Thyroid gland (tissue), 4 donors: ENCODE measurements at regions of chr10 and their contacts with region 1.

Region 1: GRCh38 chr10:11986593-11987216 is 55.9 kb downstream of the UPF2 start:
- DNase-seq: peak; percentile 86 to 90
- H3K4me3 ChIP-seq: no peak overlapping the region
- H3K27ac ChIP-seq: no peak overlapping the region
- H3K4me1 ChIP-seq: no peaks in the 10 kb centered on the region
- H3K27me3 ChIP-seq: no peaks in the 10 kb centered on the region
- CTCF ChIP-seq: peak; percentile 81 to 97 (median 87)
- POLR2A ChIP-seq: no peak

Region 2: GRCh38 chr10:11782793-11783557 is 203.7 kb before region 1 on chr10:
- intact Hi-C with region 1: loop called (anchors 5 kb)
- DNase-seq: no peak
- H3K4me3 ChIP-seq: no peak overlapping the region
- H3K27ac ChIP-seq: no peak overlapping the region
- H3K4me1 ChIP-seq: no peaks in the 10 kb centered on the region
- H3K27me3 ChIP-seq: no peaks in the 10 kb centered on the region
- CTCF ChIP-seq: peak; percentile 47 to 74 (median 59)
- POLR2A ChIP-seq: no peak

Region 3: GRCh38 chr10:12051241-12051640 is 64.5 kb after region 1 on chr10:
- intact Hi-C with region 1: no loop called
- DNase-seq: no peak
- H3K4me3 ChIP-seq: no peak overlapping the region
- H3K27ac ChIP-seq: no peak overlapping the region
- H3K4me1 ChIP-seq: peaks cover 0 to 6% of the 10 kb centered on the region in 2 donors
- H3K27me3 ChIP-seq: no peaks in the 10 kb centered on the region
- CTCF ChIP-seq: no peak
- POLR2A ChIP-seq: no peak

Region 4: DNA sequence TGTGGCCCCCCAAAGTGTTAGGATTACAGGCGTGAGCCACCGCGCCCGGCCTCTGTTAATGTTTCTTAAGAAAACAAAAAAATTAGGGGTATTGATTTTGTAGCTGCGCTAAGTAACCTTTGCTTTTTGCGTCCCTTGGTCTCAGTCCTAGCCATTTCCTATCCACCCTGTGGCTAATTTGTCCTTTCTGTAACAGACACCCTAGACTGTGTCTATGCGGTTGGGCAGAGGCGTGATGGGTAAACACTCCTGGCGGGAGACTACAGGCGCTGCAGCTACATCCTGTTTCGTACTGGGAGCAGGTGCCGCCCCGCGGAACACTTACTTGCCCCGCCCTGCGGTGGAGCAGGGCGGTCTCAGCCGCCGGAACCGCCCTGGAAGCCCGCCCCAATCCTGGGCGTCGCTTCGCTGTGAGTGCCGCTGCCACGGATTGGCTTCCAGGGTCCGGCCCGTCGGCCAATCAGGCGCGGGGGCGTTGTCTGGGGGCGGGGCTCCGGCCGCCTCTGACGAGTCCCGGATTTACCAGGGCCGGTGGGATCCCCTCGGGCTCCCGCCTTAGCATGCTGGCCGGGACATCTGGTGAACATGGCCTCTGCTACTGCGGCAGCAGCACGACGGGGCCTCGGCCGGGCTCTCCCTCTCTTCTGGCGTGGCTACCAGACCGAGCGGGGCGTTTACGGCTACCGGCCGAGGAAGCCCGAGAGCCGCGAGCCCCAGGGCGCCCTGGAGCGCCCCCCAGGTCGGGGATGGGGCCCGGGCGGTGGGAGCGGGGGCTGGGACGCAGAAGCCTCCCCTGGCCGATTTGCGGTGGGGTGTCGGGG is 82.0 kb after region 1 on chr10 and contains the start of gene DHTKD1:
- intact Hi-C with region 1: no loop called
- DNase-seq: peak; percentile 98 to 99
- H3K4me3 ChIP-seq: peak within 1 kb of the TSS; percentile 50 to 91 (median 59)
- H3K27ac ChIP-seq: peak within 1 kb of the TSS; percentile 29 to 79 (median 74)
- H3K4me1 ChIP-seq: peaks cover 6 to 9% of the 10 kb centered on the region in 2 donors
- H3K27me3 ChIP-seq: no peaks in the 10 kb centered on the region
- CTCF ChIP-seq: peak; percentile 24 to 61 (median 55)
- POLR2A ChIP-seq: peak; percentile 45 to 74
- total RNA-seq, gene DHTKD1: 29.1 to 80.2 (median 52.8) TPM

Region 5: DNA sequence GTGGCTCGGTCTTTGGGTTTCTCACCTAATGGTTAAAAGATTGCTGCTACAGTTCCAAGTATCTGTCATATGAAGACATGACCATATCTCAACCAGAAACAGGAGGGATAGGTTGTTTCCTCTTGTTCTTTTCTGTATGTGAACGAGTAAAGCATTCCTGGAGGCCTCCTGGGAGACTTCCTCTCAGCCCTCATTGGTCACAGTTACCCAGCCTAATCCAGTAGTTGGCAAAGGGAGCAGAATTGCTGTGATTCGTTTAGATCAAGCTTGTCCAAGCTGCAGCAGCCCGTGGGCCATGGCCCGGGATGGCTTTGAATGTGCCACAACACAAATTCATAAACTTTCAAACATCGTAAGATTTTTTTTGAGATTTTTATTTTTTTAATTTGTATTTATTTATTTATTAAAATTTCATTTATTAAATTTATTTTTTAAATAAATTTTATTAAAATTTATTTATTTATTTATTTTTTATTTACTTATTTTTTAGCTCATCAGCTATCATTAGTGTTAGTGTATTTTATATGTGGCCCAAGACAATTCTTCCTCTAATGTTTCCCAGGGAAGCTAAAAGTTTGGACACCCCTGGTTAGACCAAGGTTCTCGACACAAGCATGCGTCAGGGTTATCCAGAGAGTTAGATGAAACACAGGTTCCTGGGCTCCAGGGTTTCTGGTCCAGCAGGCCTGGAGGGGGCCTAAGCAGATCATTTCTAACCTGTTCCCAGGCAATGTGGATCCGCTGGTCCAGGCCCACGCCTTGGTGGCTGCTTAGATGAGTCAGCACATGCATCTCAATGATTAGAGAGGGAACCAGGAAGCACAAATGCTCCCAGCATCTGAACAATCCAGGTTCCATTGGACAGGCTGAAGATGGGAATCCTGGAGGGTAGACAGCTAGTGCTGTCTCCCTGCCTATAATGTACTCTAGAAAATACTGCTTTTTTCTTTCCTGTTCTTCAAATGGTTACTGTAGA is 234.9 kb after region 1 on chr10:
- intact Hi-C with region 1: no loop called
- DNase-seq: no peak
- H3K4me3 ChIP-seq: no peak overlapping the region
- H3K27ac ChIP-seq: no peak overlapping the region
- H3K4me1 ChIP-seq: peaks cover 0 to 8% of the 10 kb centered on the region in 2 donors
- H3K27me3 ChIP-seq: no peaks in the 10 kb centered on the region
- CTCF ChIP-seq: no peak
- POLR2A ChIP-seq: no peak

Region 6: GRCh38 chr10:12348870-12349628 is 362.3 kb after region 1 on chr10 and contains the start of gene CAMK1D:
- intact Hi-C with region 1: no loop called
- DNase-seq: peak; percentile 83 to 86
- H3K4me3 ChIP-seq: peak within 1 kb of the TSS; percentile 66 to 95 (median 71)
- H3K27ac ChIP-seq: peak within 1 kb of the TSS; percentile 74 to 93 (median 80)
- H3K4me1 ChIP-seq: peaks cover 4 to 14% of the 10 kb centered on the region in 2 donors
- H3K27me3 ChIP-seq: no peaks in the 10 kb centered on the region
- CTCF ChIP-seq: peak in 3 of 6 experiments; percentile 30 to 54 (median 37)
- POLR2A ChIP-seq: peak in 1 of 2 donors; percentile 76
- total RNA-seq, gene CAMK1D: 12.2 to 29.6 (median 17.4) TPM